ENCODE measurements at regions of chr1 and their contacts with region 1.

Region 1: DNA sequence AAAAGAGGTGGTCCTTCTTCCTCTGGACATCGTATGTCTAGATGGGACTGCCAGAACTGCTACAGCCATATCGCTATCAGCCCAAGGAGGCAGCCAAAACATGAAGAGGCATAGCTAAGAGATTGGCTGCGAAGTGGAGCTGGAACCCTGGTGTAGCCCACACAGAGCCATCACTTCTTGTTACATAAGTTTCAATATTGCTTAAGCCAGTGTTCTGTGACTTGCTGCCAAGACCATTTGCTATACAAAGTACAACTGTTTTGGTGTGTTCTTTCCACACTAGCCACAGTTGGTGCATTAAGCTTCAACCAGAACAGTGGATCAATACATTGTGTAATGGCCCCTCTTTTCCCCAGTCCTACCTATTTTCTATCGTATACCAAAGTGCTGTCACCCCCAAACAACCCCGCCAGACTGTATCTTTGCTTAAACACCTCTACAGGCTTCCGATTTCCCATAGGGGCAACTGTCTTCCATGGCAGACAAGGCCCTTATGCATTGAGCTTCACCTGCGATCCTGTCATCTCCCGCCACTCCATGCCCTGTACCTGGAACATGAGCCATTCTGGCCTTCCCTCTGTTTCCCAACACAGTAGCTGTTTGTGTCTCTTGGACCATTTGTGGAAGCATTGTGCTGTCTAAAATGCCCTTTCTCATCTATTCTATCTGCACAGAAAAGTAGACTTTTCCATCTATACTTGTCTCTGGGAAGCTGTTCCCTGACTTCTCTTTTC is 241.8 kb downstream of the TTLL7 start:
- DNase-seq: no peak
- H3K4me3 ChIP-seq: no peak overlapping the region
- H3K4me3 Mint-ChIP-seq: no peak overlapping the region
- H3K27ac Mint-ChIP-seq: no peak overlapping the region
- H3K4me1 ChIP-seq: no peaks in the 10 kb centered on the region
- H3K4me1 Mint-ChIP-seq: no peaks in the 10 kb centered on the region
- H3K27me3 ChIP-seq: no peaks in the 10 kb centered on the region
- H3K27me3 Mint-ChIP-seq: no peaks in the 10 kb centered on the region
- CTCF ChIP-seq: no peak

Region 2: DNA sequence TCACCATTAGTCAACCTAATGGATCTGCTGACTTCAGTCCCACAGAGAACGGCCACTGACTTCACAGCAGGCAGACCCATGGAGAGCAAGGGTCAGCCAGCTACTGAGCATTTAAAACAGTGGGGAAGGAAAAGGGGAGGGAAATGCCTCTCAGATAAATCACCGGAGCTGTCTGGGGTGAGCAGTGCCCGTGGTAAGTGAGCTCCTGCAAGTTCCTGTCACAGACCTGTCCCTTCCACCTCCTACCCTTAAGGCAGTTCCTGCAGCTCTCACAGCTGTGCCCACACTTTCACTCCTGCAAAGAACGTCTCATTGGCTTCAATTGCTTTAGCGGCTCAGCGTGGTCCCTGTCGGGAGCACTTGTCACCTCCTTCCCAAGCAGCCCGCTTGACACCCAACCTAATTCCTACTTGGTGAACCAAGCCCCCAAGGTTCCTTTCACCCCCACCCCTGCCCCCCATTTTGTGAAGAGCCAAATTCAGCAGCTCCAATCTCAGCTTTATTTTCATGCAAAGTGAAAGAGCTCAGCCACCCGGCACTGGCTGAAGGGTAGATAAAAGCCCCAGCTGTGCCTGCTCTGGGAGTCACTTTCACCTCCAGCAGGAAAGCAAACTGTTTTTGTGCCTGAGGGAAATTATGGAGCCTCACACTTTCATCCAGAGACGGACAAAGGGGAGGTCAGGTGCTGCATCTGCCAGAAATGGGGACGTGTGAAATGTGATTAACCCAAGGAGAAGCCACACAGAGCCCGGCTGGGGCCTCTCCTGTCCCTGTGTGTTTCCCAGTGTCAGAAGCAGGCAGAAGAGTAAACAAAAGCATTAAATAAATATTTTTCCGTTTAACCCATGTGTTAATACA is 64.4 kb before region 1 on chr1:
- CTCF ChIA-PET with region 1: interaction called, 10 read pairs
- POLR2A ChIA-PET with region 1: no interaction called
- intact Hi-C with region 1: no loop called
- DNase-seq: no peak
- H3K4me3 ChIP-seq: no peak overlapping the region
- H3K4me3 Mint-ChIP-seq: peak overlapping the region; percentile 13
- H3K27ac Mint-ChIP-seq: no peak overlapping the region
- H3K4me1 ChIP-seq: no peaks in the 10 kb centered on the region
- H3K4me1 Mint-ChIP-seq: no peaks in the 10 kb centered on the region
- H3K27me3 ChIP-seq: no peaks in the 10 kb centered on the region
- H3K27me3 Mint-ChIP-seq: peaks cover 3% of the 10 kb centered on the region
- CTCF ChIP-seq: no peak

Region 3: GRCh38 chr1:83827741-83828522 is 70.8 kb after region 1 on chr1:
- CTCF ChIA-PET with region 1: no interaction called
- POLR2A ChIA-PET with region 1: no interaction called
- intact Hi-C with region 1: no loop called
- DNase-seq: no peak
- H3K4me3 ChIP-seq: no peak overlapping the region
- H3K4me3 Mint-ChIP-seq: no peak overlapping the region
- H3K27ac Mint-ChIP-seq: no peak overlapping the region
- H3K4me1 ChIP-seq: 0 out of 2 replicates have a peak, but pooled peaks cover 4% of the 10 kb centered on the region
- H3K4me1 Mint-ChIP-seq: peaks cover 7% of the 10 kb centered on the region
- H3K27me3 ChIP-seq: no peaks in the 10 kb centered on the region
- H3K27me3 Mint-ChIP-seq: no peaks in the 10 kb centered on the region
- CTCF ChIP-seq: no peak